IMR-90 (cell line): ENCODE measurements at regions of chr5 and their contacts with region 1.

Region 1: DNA sequence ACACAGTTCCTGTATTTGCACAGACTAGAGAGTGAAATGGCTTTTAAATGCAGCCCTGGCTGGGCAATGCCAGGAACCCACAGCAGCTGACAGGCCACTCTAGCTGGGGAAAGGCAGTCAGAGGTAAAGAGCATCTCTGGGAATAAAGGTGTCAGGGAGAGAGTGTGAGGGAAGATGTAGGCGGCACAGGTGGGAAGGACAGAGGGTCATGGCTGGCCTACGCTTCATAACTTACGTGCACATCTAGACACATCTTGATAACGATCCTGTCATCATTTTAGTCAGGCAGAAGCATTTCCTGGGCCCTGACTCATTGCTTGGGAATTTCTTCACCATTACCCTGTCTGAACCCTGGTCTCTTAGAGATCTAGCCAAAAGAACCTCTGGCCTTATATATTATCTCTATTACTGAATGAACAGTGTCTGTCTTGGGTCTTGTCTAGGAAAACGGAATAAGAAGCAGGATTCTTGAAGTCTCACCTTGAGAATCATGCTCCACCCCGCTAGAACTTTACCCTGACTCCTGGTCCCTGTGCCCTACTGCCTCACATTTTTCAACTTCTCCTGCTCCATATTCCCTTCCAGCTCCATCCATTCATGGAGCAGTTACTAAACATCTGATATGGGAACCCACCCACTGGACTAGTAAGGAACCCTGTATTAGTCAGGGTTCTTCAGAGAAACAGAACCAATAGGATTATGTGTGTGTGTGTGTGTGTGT is 106.4 kb upstream of the ELL2 start:
- DNase-seq: peak; percentile 95
- ATAC-seq: peak; percentile 80
- H3K4me3 ChIP-seq: no peak overlapping the region
- H3K27ac ChIP-seq: peak overlapping the region; percentile 89
- H3K4me1 ChIP-seq: peaks cover 22% of the 10 kb centered on the region
- H3K27me3 ChIP-seq: no peaks in the 10 kb centered on the region
- CTCF ChIP-seq: no peak
- POLR2A ChIP-seq: peak; percentile 43; the same call in 1 of the 2 replicates
- RAD21 ChIP-seq: peak; percentile 10; the same call in 1 of the 2 replicates

Region 2: GRCh38 chr5:94422812-94423211 is 1645.2 kb before region 1 on chr5:
- CTCF ChIA-PET with region 1: no interaction called
- POLR2A ChIA-PET with region 1: no interaction called
- dilution Hi-C with region 1: no loop called
- in situ Hi-C with region 1: no loop called
- intact Hi-C with region 1: no loop called
- DNase-seq: peak; percentile 35
- ATAC-seq: no peak
- H3K4me3 ChIP-seq: no peak overlapping the region
- H3K27ac ChIP-seq: no peak overlapping the region
- H3K4me1 ChIP-seq: no peaks in the 10 kb centered on the region
- H3K27me3 ChIP-seq: no peaks in the 10 kb centered on the region
- CTCF ChIP-seq: no peak
- POLR2A ChIP-seq: no peak
- RAD21 ChIP-seq: no peak

Region 3: DNA sequence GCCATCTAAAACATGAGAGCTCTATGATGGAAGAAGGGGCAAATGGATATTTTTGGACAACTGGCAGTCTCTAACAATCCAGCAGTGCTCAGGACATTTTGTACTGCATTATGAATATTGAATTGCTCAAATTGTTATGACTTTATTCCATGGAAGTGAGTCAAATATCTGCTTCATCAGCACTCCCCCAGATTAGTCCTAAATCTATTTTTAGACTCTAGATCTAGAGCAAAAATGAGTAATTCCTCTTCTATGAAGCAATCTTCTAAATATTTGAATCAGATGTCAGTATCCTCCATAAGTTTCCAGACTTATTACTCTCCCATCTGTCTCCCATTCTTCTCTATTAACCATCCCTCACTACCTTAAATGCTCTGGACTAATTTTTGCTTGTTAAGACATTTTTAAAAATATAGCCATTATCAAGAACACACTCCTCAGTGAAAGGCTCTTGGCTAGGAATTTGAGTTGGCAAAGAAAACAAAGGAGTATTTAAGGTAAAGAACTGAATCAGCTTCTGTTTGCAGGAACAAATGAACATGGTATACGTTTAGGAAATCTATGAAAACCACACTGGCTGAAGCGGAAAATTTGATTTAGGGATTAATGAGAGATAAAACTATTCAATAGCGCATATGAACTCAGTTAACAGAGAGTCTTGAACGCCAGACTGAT is 1084.1 kb before region 1 on chr5:
- CTCF ChIA-PET with region 1: no interaction called
- POLR2A ChIA-PET with region 1: no interaction called
- dilution Hi-C with region 1: no loop called
- in situ Hi-C with region 1: no loop called
- intact Hi-C with region 1: no loop called
- DNase-seq: peak; percentile 58
- ATAC-seq: peak; percentile 21; the same call in 1 of the 2 replicates
- H3K4me3 ChIP-seq: no peak overlapping the region
- H3K27ac ChIP-seq: no peak overlapping the region
- H3K4me1 ChIP-seq: no peaks in the 10 kb centered on the region
- H3K27me3 ChIP-seq: no peaks in the 10 kb centered on the region
- CTCF ChIP-seq: no peak
- POLR2A ChIP-seq: no peak
- RAD21 ChIP-seq: no peak

Region 4: DNA sequence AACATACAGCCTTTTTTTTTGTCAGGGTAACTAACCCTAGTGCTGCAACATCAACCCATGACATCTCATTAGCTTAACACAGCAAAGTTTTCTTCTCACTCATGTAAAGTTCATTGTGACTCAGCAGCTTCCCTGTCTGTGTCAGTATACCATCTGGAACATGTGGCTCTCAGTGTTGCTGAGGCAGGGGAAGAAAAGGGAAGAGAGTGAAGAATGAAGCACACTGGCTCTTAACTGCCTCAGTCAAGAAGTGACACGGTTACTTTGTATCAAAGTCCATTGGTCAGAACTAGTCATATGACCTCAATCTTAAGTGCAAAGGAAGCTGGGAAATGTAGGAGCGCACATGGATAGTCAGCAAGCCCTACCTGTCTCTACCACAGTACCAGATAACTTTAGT is 78.6 kb after region 1 on chr5:
- CTCF ChIA-PET with region 1: no interaction called
- POLR2A ChIA-PET with region 1: no interaction called
- dilution Hi-C with region 1: no loop called
- in situ Hi-C with region 1: no loop called
- intact Hi-C with region 1: loop called (anchors 5 kb)
- DNase-seq: peak; percentile 95
- ATAC-seq: peak; percentile 69
- H3K4me3 ChIP-seq: no peak overlapping the region
- H3K27ac ChIP-seq: peak overlapping the region; percentile 58; the same call in 1 of the 2 replicates
- H3K4me1 ChIP-seq: peaks cover 21% of the 10 kb centered on the region
- H3K27me3 ChIP-seq: no peaks in the 10 kb centered on the region
- CTCF ChIP-seq: no peak
- POLR2A ChIP-seq: no peak
- RAD21 ChIP-seq: no peak

Region 5: DNA sequence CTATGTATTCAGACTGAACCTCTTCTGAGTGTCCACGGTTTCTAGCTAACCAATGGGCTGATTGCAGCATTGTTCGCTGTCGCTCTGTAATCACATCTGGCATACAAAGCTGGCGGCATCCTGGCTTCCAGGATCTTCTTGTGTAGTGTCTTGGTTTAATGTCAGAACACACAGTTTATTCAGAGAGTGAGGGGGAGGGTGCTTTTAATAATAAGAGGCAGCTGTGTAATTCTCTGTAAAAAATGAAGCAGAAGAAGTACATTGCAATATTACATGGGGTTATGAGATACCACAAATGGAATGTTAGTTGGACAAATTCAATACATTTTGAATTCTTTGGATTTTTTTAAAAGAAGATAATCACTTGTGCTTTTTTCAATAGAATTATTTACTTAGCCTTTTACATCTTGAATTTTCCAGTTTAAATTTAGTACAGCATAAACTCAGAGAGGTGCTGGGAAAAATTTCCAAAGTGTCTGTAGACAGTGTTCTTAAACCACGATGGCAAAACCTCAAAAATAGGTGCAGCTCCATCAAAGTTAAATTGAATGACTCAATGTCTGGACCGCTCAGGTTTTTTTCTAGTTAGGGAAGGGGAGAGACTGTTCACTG is 159.0 kb after region 1 on chr5:
- CTCF ChIA-PET with region 1: no interaction called
- POLR2A ChIA-PET with region 1: no interaction called
- dilution Hi-C with region 1: no loop called
- in situ Hi-C with region 1: no loop called
- intact Hi-C with region 1: loop called (anchors 2 kb)
- DNase-seq: peak; percentile 97
- ATAC-seq: peak; percentile 97
- H3K4me3 ChIP-seq: no peak overlapping the region
- H3K27ac ChIP-seq: peak overlapping the region; percentile 100
- H3K4me1 ChIP-seq: peaks cover 9% of the 10 kb centered on the region
- H3K27me3 ChIP-seq: no peaks in the 10 kb centered on the region
- CTCF ChIP-seq: no peak
- POLR2A ChIP-seq: no peak
- RAD21 ChIP-seq: peak; percentile 8; the same call in 1 of the 2 replicates

Region 6: GRCh38 chr5:96565582-96566265 is 497.7 kb after region 1 on chr5:
- CTCF ChIA-PET with region 1: no interaction called
- POLR2A ChIA-PET with region 1: no interaction called
- dilution Hi-C with region 1: no loop called
- in situ Hi-C with region 1: no loop called
- intact Hi-C with region 1: no loop called
- DNase-seq: peak; percentile 90
- ATAC-seq: peak; percentile 67
- H3K4me3 ChIP-seq: no peak overlapping the region
- H3K27ac ChIP-seq: no peak overlapping the region
- H3K4me1 ChIP-seq: peaks cover 15% of the 10 kb centered on the region
- H3K27me3 ChIP-seq: no peaks in the 10 kb centered on the region
- CTCF ChIP-seq: no peak
- POLR2A ChIP-seq: no peak
- RAD21 ChIP-seq: no peak